ENCODE measurements at regions of chr2 and their contacts with region 1.

Region 1: DNA sequence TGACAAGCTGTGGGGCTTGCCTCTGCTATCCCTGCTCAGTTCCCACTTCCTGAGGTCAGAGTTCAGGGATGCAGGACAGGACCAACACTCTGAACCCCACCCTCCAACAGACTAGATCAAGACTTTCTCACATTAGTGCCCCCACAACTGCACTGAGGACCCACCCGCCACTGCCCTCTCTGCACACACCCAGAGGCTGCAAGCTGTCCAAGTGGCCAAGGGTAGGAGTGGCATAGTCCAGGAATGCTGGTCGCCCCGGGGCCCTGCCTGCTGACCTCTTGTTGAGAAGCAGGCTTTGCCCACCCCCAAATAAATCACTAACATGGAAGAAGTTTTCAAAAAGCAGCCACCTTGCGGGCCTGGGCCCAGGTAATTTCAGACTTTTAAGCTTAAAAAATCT is 5.5 kb upstream of the KIF1A start:
- DNase-seq: no peak
- H3K4me3 ChIP-seq: no peak overlapping the region
- CTCF ChIP-seq: no peak

Region 2: DNA sequence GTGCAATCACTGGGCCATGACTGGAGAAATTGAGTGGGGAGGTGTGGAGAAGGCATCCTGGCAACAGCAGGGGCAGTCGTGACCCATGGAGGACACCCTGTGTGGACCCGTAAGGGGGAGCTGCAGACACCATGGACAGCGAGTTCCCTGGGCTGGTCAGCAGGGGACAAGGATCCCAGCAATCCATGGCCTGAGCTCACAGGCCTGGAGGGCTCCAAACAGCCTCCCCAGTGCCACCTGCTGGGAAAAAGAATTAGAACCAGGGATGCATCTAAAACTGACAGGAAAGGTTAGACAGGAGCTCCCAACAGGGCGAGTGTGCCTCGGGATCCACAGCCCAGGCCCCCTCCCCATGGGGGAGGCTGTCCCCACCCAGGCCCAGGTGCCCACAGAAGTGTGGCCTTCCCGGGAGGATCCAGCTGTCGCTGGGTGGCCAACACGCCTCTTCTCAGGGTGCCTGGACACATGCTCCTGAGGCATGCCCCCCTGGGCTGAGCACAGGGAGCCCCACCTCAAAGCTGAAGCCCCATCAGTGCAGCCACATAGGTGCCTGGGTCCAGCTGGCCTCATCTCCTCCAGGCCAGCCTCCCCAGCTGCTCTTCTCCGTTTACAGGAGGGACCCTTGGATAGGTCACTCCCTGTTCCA is 15.1 kb after region 1 on chr2:
- CTCF ChIA-PET with region 1: interaction called, 22 read pairs
- POLR2A ChIA-PET with region 1: no interaction called
- DNase-seq: no peak
- H3K4me3 ChIP-seq: no peak overlapping the region
- CTCF ChIP-seq: peak; percentile 69